ENCODE measurements at regions of chr11 and their contacts with region 1.

Region 1: GRCh38 chr11:18321980-18322711 is at the starts of genes GTF2H1 and HPS5:
- DNase-seq: peak; percentile 97
- ATAC-seq: peak; percentile 89
- H3K4me3 Mint-ChIP-seq: peak within 1 kb of the TSS; percentile 92
- H3K27ac Mint-ChIP-seq: peak within 1 kb of the TSS; percentile 100
- H3K4me1 Mint-ChIP-seq: peaks cover 59% of the 10 kb centered on the region
- H3K27me3 Mint-ChIP-seq: no peaks in the 10 kb centered on the region
- total RNA-seq, gene GTF2H1: 48.2 to 57.9 TPM
- total RNA-seq, gene HPS5: 14.3 to 16.1 TPM

Region 2: DNA sequence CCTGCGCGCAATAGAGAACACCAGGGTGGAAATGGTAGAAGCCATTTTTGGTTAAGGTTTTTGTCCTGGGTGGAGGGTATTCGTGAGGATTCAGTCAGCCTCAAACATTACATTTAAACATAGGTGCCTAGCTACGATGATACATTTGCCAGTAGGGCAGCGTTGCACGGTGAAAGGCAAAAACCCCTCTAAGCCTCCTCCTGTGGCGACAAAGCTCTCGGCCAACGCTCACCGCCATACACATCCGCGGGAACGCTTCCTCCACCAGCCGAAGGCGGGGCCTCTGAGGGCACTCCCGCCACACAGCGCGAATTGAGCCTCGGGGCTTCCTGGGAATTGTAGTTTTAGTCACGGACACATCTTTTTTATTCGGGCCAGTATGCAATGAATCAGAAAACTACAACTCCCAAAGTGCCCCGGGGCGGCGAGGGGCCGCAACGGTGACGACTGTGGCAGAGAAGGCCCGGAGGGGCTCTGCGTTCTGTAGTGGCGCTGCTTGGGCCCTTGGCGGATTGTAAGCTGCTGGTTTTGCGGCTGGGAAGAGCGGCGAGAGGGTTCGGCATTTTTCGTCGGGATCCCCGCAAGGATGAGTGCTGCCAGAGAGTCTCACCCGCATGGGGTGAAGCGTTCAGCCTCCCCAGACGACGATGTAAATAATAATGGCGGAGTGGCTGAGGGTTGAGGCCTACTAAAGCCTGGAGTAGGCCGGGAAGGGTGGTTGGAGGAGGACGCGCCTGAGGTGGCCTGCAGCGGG is 1583.8 kb before region 1 on chr11 and contains the start of gene C11orf58:
- CTCF ChIA-PET with region 1: no interaction called
- POLR2A ChIA-PET with region 1: no interaction called
- intact Hi-C with region 1: loop called in 1 of 2 experiments (anchors 5 kb)
- DNase-seq: peak; percentile 96
- ATAC-seq: peak; percentile 97
- H3K4me3 Mint-ChIP-seq: no peak within 1 kb of the TSS
- H3K27ac Mint-ChIP-seq: peak within 1 kb of the TSS; percentile 92
- H3K4me1 Mint-ChIP-seq: peaks cover 23% of the 10 kb centered on the region
- H3K27me3 Mint-ChIP-seq: no peaks in the 10 kb centered on the region
- total RNA-seq, gene C11orf58: 142 to 193 TPM

Region 3: GRCh38 chr11:18012863-18013781 is 309.0 kb before region 1 on chr11 and contains the start of gene SERGEF:
- CTCF ChIA-PET with region 1: no interaction called
- POLR2A ChIA-PET with region 1: no interaction called
- intact Hi-C with region 1: loop called in 1 of 2 experiments (anchors 1 kb)
- DNase-seq: peak; percentile 96
- ATAC-seq: peak; percentile 93
- H3K4me3 Mint-ChIP-seq: peak within 1 kb of the TSS; percentile 85
- H3K27ac Mint-ChIP-seq: peak within 1 kb of the TSS; percentile 98
- H3K4me1 Mint-ChIP-seq: peaks cover 39% of the 10 kb centered on the region
- H3K27me3 Mint-ChIP-seq: no peaks in the 10 kb centered on the region
- total RNA-seq, gene SERGEF: 47.5 to 57.5 TPM

Region 4: DNA sequence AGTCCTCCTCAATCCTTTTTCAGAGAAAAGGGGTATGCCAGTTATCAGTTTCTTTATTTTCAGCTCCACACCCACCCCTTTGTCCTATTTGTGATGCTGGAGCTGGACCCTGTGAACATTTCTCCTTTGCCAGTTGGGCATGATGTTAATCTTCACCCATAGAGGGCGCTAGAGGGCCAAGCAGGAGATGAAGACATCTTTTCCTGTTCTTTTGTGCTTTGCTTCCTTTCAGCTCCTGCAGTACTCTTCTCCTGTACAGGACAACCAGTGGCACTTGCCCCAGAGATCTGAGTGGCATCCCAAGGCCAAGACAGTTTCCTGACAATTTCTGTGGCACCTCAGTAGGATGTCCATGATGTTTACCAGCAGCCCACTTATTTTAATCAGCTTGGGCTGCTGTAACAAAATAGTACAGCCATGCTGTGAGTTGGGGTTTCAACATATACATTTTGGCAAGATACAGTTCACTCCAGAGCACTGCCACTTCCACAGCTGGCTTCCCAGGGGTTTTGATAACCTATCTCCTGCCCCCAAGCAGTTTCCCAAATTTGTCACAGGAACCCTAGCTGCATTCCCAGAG is 78.3 kb before region 1 on chr11:
- CTCF ChIA-PET with region 1: interaction called, 23 read pairs
- POLR2A ChIA-PET with region 1: no interaction called
- intact Hi-C with region 1: loop called in 1 of 2 experiments (anchors 2 kb)
- DNase-seq: peak; percentile 77
- ATAC-seq: no peak
- H3K4me3 Mint-ChIP-seq: no peak overlapping the region
- H3K27ac Mint-ChIP-seq: no peak overlapping the region
- H3K4me1 Mint-ChIP-seq: peaks cover 11% of the 10 kb centered on the region
- H3K27me3 Mint-ChIP-seq: peaks cover 7% of the 10 kb centered on the region

Region 5: DNA sequence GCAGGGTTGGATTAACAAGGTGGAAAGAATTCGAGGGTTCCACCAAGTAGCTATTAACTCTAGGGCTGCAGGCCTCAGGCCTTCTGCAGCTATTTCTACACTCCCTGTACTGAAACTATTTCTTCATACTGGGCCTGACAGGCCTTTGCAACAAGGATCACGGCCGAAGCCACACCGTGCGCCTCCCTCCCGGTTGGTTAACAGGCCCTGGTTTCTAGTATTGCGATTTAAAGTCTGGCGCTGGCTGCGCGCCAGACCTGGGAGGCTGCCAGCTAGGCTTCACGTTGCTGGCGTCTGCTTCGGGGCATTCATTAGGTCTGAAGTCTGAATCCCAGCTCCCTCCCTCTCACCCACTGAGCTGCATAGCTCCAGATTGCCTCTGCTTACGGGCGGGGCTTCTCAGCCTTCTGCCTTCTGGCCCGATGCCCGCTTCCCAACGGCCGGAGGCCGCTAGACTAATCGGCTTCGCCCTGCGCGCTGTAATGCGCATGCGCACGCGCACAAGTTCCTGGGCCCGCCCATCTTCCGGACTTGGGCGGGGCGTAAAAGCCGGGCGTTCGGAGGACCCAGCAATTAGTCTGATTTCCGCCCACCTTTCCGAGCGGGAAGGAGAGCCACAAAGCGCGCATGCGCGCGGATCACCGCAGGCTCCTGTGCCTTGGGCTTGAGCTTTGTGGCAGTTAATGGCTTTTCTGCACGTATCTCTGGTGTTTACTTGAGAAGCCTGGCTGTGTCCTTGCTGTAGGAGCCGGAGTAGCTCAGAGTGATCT is 73.8 kb after region 1 on chr11:
- CTCF ChIA-PET with region 1: interaction called, 19 read pairs
- POLR2A ChIA-PET with region 1: interaction called, 31 read pairs
- intact Hi-C with region 1: loop called (anchors 1 kb)
- DNase-seq: peak; percentile 96
- ATAC-seq: peak; percentile 65
- H3K4me3 Mint-ChIP-seq: peak overlapping the region; percentile 97
- H3K27ac Mint-ChIP-seq: peak overlapping the region; percentile 99
- H3K4me1 Mint-ChIP-seq: peaks cover 65% of the 10 kb centered on the region
- H3K27me3 Mint-ChIP-seq: no peaks in the 10 kb centered on the region

Region 6: DNA sequence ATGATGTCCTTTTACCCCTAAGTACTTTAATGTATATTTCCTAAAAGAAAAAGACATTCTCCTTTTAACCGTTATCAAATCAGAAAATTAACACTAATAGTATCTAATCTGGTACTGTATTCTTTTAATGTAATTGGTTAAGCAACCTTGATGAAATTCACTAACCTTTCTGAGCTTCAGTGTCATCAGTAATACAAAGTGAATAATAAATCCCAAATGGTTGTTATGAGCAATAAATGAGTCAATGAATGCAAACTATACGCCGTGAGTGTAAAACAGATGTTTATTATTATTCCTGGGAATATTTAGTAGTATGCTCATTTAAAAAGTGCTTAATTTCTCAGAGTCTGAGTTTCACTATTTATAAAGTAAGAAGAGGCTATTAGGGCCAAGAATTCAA is 244.9 kb after region 1 on chr11:
- CTCF ChIA-PET with region 1: no interaction called
- POLR2A ChIA-PET with region 1: no interaction called
- intact Hi-C with region 1: no loop called
- DNase-seq: no peak
- ATAC-seq: no peak
- H3K4me3 Mint-ChIP-seq: no peak overlapping the region
- H3K27ac Mint-ChIP-seq: no peak overlapping the region
- H3K4me1 Mint-ChIP-seq: no peaks in the 10 kb centered on the region
- H3K27me3 Mint-ChIP-seq: no peaks in the 10 kb centered on the region

Region 7: DNA sequence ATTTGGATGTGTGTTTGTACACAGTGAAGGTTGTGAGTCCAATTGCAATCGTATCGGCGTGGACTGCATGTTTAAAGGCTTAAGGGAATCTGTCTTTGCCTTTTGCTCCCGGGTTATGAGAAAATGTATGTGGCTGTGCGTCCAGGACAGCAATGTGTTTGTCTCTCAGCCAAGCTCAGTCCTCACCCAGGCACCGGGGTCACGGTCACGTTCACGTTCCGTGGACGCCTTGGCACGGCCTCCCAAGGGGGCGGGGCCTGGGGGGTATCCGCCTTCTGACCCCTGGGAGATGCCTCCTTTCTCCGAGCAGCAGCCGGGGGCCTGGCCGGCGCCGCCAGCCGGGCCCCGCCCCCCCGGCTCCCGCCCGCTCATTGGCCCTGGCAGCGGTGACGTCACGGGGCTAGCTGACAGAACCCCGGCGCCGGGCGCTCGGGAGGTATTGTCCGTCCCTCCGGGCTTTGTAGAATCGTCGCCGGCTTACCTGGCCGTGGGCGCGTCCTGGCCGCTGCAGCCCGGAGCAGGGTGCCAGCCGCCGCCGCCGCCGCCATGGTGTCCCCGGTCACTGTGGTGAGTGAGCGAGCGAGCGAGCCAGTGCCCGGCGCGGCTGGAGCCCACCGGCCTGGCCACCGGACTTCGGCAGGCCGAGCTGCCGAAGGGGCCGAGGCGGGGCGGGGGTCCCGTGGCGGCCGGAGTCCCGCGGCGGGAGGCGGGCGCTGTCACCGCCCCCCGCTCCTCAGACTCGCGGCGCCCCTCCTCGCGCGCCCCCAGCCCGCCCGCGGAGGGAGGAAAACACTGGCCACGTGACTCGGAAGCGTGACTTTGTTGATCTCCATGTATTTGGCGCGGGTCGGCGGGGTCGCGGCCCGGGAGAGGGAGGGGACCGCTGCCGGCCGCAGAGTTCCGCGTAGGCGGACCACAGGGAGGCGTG is 376.5 kb after region 1 on chr11 and contains the start of gene TMEM86A:
- CTCF ChIA-PET with region 1: no interaction called
- POLR2A ChIA-PET with region 1: no interaction called
- intact Hi-C with region 1: loop called in 1 of 2 experiments (anchors 1 kb)
- DNase-seq: peak; percentile 93
- ATAC-seq: peak; percentile 96
- H3K4me3 Mint-ChIP-seq: peak within 1 kb of the TSS; percentile 72
- H3K27ac Mint-ChIP-seq: peak within 1 kb of the TSS; percentile 69
- H3K4me1 Mint-ChIP-seq: peaks cover 13% of the 10 kb centered on the region
- H3K27me3 Mint-ChIP-seq: peaks cover 3% of the 10 kb centered on the region
- total RNA-seq, gene TMEM86A: 0.09 to 0.26 TPM

Measured in activated CD4-positive, alpha-beta T cell treated with anti-CD3 and anti-CD28 coated beads for 36 hours (primary cell).